Head of caudate nucleus (tissue), 42 donors: ENCODE measurements at regions of chr13 and their contacts with region 1.

Region 1: GRCh38 chr13:97109841-97110492 is 112.2 kb upstream of the MBNL2 start:
- DNase-seq: peak; percentile 78 to 96 (median 90)

Region 2: GRCh38 chr13:97212601-97213040 is 102.7 kb after region 1 on chr13:
- intact Hi-C with region 1: loop called (anchors 5 kb)
- DNase-seq: peak in 22 of 42 donors; percentile 24 to 81 (median 55)

Region 3: DNA sequence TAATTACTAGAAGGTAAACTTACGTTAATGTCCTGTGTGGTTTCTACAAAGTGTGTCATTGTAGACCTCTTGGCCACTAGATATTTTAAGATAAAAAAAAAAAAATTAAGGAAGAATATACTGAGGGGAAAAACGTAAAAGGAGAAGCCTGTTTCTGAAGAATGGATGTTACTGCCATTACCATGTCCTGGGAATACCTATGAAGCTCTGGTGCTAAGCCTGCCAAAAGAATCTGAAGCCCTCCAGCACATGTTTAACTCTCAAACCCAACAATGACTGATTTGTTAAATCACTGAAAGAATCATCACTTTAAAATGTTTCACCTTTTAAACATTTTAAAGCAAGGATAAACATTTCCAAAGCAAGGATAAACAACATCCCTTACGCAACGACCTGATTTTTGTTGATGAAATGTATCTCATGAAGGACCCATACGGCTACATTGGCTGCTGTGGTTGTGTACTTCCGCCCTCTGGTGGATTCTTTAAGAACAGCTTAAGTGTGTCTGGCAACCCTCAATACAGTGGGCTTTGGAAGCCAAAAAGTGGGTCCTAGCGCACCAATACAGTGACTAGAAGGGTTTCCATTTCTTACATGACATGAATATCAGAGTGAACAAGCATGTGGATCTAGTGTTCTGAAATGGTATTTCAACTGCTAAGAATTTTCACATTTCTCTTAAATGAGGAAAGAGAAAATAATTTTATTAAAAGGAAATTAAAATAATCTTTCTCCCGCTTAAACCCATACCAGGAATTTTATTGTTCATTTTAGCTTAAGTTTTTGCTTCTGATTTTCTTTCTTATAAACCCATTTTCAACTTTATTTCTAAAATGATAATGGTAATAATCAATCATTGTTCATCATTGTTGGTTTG is 249.5 kb after region 1 on chr13:
- intact Hi-C with region 1: loop called (anchors 5 kb)
- DNase-seq: peak in 34 of 42 donors; percentile 30 to 86 (median 62)

Region 4: DNA sequence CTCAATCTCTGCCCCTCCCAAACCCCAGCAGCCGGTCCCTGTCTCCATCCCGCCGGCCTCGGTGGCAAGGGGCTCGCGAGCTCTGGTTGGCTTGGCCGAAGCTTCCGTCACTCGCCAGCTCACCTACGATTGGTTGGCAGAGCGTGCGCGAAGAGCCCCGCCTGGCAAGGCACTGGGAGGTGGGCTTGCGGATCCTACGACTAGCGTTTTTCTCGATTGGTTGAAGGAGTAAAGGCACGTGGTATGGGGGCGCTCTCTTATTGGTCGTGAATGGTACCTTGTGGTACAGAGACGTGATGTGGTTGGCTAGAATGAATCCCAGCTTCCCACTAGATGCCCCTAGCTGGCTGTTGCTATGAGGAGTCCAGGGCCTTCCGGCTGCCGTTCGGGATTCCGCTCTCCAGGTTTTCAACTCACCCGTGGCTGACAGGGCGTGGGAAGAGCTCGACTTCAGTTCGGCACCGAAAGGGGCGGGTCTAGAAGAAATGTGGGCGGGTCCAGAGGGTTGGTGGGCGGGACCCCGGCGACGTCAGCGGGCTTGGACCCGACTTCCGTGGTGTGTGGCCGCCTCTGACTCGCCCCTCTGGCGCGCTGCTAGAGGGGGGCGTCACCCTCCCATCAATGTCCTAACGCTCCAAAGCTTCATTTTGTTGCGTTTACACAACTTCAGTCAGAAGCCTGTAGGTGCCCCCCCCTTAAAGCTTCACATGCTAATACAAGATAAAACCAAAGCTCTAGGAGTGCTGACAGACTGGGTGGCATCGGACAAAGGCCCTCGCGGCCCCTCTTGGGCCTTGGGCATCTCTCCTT is 323.2 kb after region 1 on chr13:
- intact Hi-C with region 1: loop called (anchors 5 kb)
- DNase-seq: peak; percentile 97 to 100 (median 99)